HCT116 (cell line): ENCODE measurements at regions of chr9 and their contacts with region 1.

Region 1: DNA sequence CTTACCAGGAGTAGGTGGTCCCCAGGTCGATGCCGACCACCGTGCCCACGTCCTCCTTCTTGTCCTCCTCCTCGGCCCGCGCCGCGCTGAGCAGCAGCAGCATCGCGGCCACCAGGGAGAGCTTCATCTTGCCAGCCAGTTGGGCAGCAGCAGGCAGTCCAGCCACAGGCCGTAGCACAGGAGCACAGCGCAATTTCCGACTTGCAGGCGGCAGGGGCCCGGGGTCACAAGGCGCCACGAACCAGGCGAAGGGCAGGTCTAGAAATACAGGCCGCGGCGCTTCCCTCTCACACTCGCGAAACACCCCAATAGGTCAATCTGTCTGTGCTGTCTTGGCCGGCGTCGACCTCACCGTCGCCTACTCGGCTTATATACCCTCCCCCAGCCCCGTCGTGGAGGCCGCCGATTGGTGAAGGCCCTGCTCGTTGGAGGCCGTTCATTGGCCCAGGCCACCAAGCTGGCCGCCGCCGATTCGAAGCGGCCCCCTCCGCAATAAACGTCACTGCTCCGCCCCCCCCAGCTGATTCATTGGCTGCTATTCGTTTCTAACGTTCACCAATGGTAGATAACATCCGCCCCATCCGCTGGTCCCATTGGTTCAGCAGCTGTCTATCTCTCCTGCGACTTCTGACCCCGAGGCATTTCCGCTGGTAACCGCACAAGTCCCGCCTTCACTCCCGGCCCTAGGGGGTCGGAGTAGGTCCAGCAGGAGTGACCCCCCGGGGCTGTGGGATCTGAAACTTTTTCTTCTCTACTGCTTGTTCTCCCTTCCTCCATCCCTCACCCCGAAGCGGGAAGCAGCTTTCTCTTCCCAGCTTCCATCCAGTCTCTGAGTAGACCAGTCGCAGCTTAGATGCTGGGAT is at the start of gene HSPA5:
- DNase-seq: peak; percentile 99
- ATAC-seq: peak; percentile 87
- H3K4me3 ChIP-seq: peak within 1 kb of the TSS; percentile 97 to 99
- H3K27ac ChIP-seq: peak within 1 kb of the TSS; percentile 89
- H3K4me1 ChIP-seq: peaks cover 27 to 42% of the 10 kb centered on the region in 2 experiments
- H3K27me3 ChIP-seq: no peaks in the 10 kb centered on the region
- CTCF ChIP-seq: no peak
- POLR2A ChIP-seq: peak; percentile 98
- RAD21 ChIP-seq: no peak
- total RNA-seq, gene HSPA5: 438 TPM

Region 2: DNA sequence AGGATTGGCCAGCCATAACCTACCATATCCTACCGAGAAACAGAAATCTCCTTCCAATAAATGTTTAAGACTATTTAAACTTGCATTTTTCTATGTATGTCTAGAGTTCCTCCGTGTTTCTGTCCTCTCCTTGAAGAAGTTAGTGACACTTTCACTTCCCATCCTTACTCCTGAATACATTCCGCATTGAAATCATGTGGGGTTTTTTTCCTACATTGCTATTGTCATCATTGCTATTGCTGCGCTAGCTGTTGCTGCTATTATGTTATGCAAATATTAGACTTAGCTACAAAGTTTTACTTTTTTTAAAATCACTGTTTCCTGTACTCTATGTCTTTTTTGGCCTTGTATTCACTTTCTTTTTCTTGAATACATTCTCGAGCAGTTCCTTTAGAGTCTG is 1066.8 kb before region 1 on chr9:
- CTCF ChIA-PET with region 1: no interaction called
- POLR2A ChIA-PET with region 1: no interaction called
- RAD21 ChIA-PET with region 1: no interaction called
- intact Hi-C with region 1: no loop called
- DNase-seq: no peak
- ATAC-seq: no peak
- H3K4me3 ChIP-seq: no peak overlapping the region
- H3K27ac ChIP-seq: no peak overlapping the region
- H3K4me1 ChIP-seq: no peaks in the 10 kb centered on the region
- H3K27me3 ChIP-seq: no peaks in the 10 kb centered on the region
- CTCF ChIP-seq: no peak
- POLR2A ChIP-seq: no peak
- RAD21 ChIP-seq: no peak

Region 3: GRCh38 chr9:125227761-125228160 is 13.5 kb before region 1 on chr9:
- CTCF ChIA-PET with region 1: no interaction called
- POLR2A ChIA-PET with region 1: interaction called, 20 read pairs
- RAD21 ChIA-PET with region 1: no interaction called
- intact Hi-C with region 1: no loop called
- DNase-seq: no peak
- ATAC-seq: no peak
- H3K4me3 ChIP-seq: no peak overlapping the region
- H3K27ac ChIP-seq: no peak overlapping the region
- H3K4me1 ChIP-seq: no peaks in the 10 kb centered on the region
- H3K27me3 ChIP-seq: no peaks in the 10 kb centered on the region
- CTCF ChIP-seq: no peak
- POLR2A ChIP-seq: no peak
- RAD21 ChIP-seq: no peak

Region 4: GRCh38 chr9:125255781-125256391 is 14.7 kb after region 1 on chr9:
- CTCF ChIA-PET with region 1: no interaction called
- POLR2A ChIA-PET with region 1: interaction called, 54 read pairs
- RAD21 ChIA-PET with region 1: no interaction called
- intact Hi-C with region 1: no loop called
- DNase-seq: no peak
- ATAC-seq: peak; percentile 77
- H3K4me3 ChIP-seq: no peak overlapping the region
- H3K27ac ChIP-seq: no peak overlapping the region
- H3K4me1 ChIP-seq: peaks cover 3 to 4% of the 10 kb centered on the region in 2 experiments; a peak in 2 of 4 replicates
- H3K27me3 ChIP-seq: no peaks in the 10 kb centered on the region
- CTCF ChIP-seq: peak; percentile 19 to 41 (median 41); a peak in 4 of 6 replicates
- POLR2A ChIP-seq: no peak
- RAD21 ChIP-seq: peak; percentile 76

Region 5: DNA sequence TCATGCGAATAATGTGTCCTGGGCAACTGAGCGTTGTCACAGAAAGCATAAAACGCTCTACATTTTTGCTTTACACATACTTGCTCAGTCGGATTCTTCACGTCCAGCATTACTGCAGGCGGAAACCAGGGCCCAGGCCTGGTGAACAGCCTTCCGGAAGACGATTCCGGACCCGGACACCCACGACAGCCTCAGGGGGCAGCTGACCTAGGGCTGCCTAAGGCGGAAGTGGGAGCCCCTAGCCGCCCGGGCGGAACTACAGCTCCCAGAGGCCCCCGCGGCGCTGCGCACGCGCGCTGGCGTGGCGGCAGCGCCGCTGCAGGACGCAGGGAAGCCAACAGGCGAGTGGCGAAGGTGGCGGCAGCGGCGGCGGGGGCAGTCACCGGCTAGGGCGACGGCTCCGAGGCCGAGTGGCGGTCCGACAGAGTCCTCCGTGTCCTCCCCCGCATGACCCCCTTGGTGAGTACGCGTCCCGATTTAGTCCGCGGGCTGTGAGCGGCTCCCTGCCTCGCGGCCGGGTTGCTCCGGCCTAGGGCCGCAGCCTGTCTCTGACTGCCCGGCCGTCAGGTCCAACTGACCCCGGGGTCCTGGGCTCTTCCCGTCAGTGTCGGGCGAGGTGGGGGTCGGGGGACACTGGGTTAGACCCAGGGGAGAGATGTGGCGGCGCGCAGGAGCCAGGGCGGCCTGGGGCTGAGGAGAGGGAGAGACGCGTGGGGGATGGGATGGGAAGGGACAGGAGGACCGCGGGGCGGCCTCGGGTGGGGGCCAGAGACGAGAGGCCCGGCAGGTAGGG is 20.5 kb after region 1 on chr9 and contains the start of gene GAPVD1:
- CTCF ChIA-PET with region 1: interaction called, 5 read pairs
- POLR2A ChIA-PET with region 1: interaction called, 54 read pairs
- RAD21 ChIA-PET with region 1: no interaction called
- intact Hi-C with region 1: no loop called
- DNase-seq: peak; percentile 78
- ATAC-seq: peak; percentile 98
- H3K4me3 ChIP-seq: peak within 1 kb of the TSS; percentile 92 to 99
- H3K27ac ChIP-seq: peak within 1 kb of the TSS; percentile 70
- H3K4me1 ChIP-seq: peaks cover 3 to 19% of the 10 kb centered on the region in 2 experiments; a peak in 2 of 4 replicates
- H3K27me3 ChIP-seq: no peaks in the 10 kb centered on the region
- CTCF ChIP-seq: peak in 2 of 3 experiments; percentile 33 to 34; a peak in 4 of 6 replicates
- POLR2A ChIP-seq: no peak
- RAD21 ChIP-seq: no peak
- total RNA-seq, gene GAPVD1: 53.1 TPM

Region 6: GRCh38 chr9:125276771-125277170 is 35.5 kb after region 1 on chr9:
- CTCF ChIA-PET with region 1: no interaction called
- POLR2A ChIA-PET with region 1: interaction called, 10 read pairs
- RAD21 ChIA-PET with region 1: no interaction called
- intact Hi-C with region 1: no loop called
- DNase-seq: no peak
- ATAC-seq: no peak
- H3K4me3 ChIP-seq: no peak overlapping the region
- H3K27ac ChIP-seq: no peak overlapping the region
- H3K4me1 ChIP-seq: no peaks in the 10 kb centered on the region
- H3K27me3 ChIP-seq: no peaks in the 10 kb centered on the region
- CTCF ChIP-seq: no peak
- POLR2A ChIP-seq: no peak
- RAD21 ChIP-seq: no peak

Region 7: DNA sequence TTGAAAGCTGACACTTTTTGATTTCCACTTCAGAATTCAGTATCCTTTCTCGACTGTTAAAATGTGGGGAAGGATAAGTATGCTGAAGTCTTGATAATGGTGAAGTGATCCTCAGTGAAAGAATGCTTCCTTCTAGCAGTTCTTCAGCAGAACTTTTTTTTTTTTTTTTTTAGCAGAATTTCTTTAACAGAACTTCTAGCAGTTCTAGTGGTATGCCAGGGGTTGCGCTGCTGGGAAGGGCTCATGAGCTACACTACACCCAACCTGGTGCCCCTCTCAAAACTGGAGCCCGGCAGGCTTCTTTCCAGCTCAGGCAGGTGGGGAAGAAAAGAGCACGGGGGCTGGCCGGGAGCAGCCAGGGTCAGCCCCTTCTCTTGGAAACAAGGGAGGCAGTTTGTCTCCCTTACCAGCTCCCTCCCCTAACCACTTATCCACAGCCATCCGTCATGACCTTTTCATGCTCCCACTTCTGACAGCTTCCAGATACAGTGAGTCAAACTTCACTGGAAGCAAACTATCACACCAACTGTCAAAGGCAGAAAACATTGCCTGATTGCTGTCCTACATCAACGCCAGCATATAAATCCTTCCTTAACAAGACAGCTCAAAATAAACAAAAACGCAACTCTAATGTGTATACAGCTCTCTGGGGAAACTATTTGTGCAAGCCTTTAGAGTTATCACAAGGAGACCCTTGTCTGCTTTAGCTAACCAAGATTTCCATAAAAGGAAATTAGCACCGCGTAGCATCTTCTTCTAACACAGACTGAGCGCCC is 231.9 kb after region 1 on chr9:
- CTCF ChIA-PET with region 1: no interaction called
- POLR2A ChIA-PET with region 1: no interaction called
- RAD21 ChIA-PET with region 1: no interaction called
- intact Hi-C with region 1: no loop called
- DNase-seq: no peak
- ATAC-seq: no peak; the same call in 1 of the 2 replicates
- H3K4me3 ChIP-seq: no peak overlapping the region
- H3K27ac ChIP-seq: no peak overlapping the region
- H3K4me1 ChIP-seq: no peaks in the 10 kb centered on the region
- H3K27me3 ChIP-seq: no peaks in the 10 kb centered on the region
- CTCF ChIP-seq: no peak
- POLR2A ChIP-seq: no peak
- RAD21 ChIP-seq: no peak